Heart left ventricle (tissue), 16 donors: ENCODE measurements at regions of chr2 and their contacts with region 1.

Region 1: GRCh38 chr2:167212014-167212648 is 323.9 kb downstream of the XIRP2 start:
- DNase-seq: peak in 1 of 5 donors; percentile 29
- ATAC-seq: peak in 3 of 4 donors; percentile 66 to 70 (median 67)
- H3K4me3 ChIP-seq: no peak overlapping the region
- H3K27ac ChIP-seq: no peak overlapping the region
- H3K4me1 ChIP-seq: peaks cover 0 to 24% (median 14%) of the 10 kb centered on the region in 12 donors
- H3K27me3 ChIP-seq: no peaks in the 10 kb centered on the region
- CTCF ChIP-seq: peak; percentile 50 to 80 (median 75)
- POLR2A ChIP-seq: no peak

Region 2: DNA sequence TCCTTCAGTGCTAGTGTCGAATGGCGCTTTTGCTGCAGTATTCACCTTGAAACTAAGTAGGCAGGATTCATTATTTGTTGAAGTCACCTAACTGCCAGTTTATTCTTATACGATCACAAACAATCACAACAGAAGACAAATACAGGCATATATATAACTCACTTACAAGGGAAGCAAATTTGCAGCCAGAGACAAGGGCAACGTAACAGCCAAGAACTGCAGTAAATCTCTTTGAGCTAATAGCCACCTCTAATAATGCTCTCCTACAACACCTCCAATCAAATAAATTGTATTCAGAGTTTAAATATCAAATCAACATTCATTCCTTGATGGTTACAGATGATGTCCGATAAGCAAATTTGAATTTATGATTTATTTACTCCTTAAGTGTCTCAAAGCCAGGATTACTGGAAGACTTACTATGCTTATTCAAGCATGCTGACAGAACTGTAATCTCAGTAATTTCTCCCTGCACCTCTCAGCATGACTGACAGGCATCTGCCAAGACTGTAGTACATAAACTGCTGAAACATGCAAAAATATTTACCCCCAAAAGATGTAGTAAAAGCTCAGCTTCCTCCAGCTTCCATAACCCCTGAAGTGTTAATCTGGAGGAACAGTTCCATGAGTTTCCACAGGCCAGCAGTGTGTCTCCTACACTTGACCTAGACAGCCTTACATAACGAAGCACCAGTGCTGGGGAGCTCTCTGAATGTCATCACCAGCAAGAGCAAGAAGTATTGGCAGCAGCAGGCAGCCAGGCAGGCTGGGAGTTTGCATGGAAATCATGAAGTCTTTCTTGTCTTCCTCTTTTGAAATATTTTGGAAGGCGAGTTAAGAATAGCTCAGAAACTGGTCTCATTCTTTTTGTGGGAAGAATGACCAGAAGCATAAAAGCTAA is 1063.4 kb before region 1 on chr2:
- intact Hi-C with region 1: no loop called
- DNase-seq: peak in 4 of 5 donors; percentile 8 to 55 (median 29)
- ATAC-seq: peak; percentile 90 to 96 (median 92)
- H3K4me3 ChIP-seq: no peak overlapping the region
- H3K27ac ChIP-seq: no peak overlapping the region
- H3K4me1 ChIP-seq: peaks cover 0 to 10% (median 0%) of the 10 kb centered on the region in 12 donors
- H3K27me3 ChIP-seq: no peaks in the 10 kb centered on the region
- CTCF ChIP-seq: no peak
- POLR2A ChIP-seq: no peak

Region 3: DNA sequence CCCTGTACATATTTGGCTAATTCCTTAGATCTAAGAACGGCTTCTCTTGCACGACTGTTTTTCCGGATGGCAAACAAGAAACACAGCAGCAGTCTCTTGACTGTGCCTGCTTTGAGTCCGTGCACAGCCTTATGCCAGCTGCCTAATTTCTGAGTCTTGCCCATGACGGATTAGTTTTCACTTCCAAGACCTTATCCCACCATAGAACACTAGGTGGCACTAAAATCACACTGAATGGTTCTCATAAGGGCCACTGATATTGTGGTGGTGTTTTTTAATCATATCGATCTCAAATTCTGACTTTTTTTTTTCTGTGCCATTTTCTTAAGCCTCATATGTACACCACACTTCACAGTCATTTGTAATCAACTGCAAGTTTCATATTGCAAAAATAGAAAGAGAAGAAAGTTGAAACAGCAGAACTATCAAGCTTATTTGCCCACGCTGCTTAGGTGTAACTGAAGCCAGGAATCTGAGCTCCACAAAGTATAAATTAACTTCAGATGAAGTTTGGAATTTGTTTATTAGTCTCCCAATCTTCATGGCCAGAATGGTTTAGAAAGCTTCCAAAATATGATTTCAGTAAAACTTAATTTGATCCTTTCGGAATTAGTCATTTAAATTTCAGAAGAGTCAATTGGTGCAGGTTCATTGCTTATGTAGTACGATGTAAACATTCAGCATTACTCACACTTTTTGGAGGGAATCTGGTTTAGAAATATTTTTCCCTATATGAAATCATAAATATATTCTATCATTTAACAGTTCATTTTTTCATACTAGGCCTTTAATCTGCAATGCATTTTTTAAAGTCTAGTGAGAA is 672.6 kb before region 1 on chr2:
- intact Hi-C with region 1: loop called in 4 of 10 experiments (anchors 5 to 10 kb)
- DNase-seq: no peak
- ATAC-seq: peak; percentile 51 to 87 (median 74)
- H3K4me3 ChIP-seq: no peak overlapping the region
- H3K27ac ChIP-seq: no peak overlapping the region
- H3K4me1 ChIP-seq: peaks cover 0 to 5% (median 0%) of the 10 kb centered on the region in 12 donors
- H3K27me3 ChIP-seq: peaks cover 0 to 3% (median 0%) of the 10 kb centered on the region in 9 donors
- CTCF ChIP-seq: peak; percentile 63 to 82 (median 73)
- POLR2A ChIP-seq: no peak

Region 4: GRCh38 chr2:166900700-166901099 is 311.4 kb before region 1 on chr2:
- intact Hi-C with region 1: loop called in 2 of 10 experiments (anchors 5 kb)
- DNase-seq: no peak
- ATAC-seq: peak; percentile 32 to 78 (median 54)
- H3K4me3 ChIP-seq: no peak overlapping the region
- H3K27ac ChIP-seq: no peak overlapping the region
- H3K4me1 ChIP-seq: no peaks in the 10 kb centered on the region
- H3K27me3 ChIP-seq: no peaks in the 10 kb centered on the region
- CTCF ChIP-seq: peak in 6 of 12 donors; percentile 8 to 35 (median 18)
- POLR2A ChIP-seq: no peak

Region 5: DNA sequence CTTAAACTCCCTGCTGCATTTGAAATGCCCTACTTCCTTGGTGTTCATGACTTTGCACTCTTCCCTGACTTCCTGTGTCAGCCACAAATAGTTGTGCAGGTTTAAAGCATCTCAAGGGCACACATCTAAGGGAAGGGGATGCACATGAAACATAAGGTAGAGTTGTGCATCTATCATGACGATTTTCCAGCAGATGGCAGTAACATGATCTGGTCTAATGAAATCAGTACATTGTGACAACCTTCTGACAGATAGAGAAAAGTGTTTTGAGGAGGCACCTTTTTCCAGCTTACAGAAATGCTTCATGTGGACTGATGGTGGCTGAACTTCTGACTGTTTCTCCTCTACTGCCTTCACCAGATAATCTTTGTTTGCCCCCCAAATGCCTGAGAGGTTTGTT is 85.0 kb before region 1 on chr2:
- intact Hi-C with region 1: loop called in 6 of 10 experiments (anchors 1 to 5 kb)
- DNase-seq: no peak
- ATAC-seq: peak in 3 of 4 donors; percentile 41 to 48 (median 41)
- H3K4me3 ChIP-seq: no peak overlapping the region
- H3K27ac ChIP-seq: no peak overlapping the region
- H3K4me1 ChIP-seq: peaks cover 0 to 5% (median 0%) of the 10 kb centered on the region in 12 donors
- H3K27me3 ChIP-seq: no peaks in the 10 kb centered on the region
- CTCF ChIP-seq: peak in 5 of 12 donors; percentile 24 to 46 (median 36)
- POLR2A ChIP-seq: no peak

Region 6: DNA sequence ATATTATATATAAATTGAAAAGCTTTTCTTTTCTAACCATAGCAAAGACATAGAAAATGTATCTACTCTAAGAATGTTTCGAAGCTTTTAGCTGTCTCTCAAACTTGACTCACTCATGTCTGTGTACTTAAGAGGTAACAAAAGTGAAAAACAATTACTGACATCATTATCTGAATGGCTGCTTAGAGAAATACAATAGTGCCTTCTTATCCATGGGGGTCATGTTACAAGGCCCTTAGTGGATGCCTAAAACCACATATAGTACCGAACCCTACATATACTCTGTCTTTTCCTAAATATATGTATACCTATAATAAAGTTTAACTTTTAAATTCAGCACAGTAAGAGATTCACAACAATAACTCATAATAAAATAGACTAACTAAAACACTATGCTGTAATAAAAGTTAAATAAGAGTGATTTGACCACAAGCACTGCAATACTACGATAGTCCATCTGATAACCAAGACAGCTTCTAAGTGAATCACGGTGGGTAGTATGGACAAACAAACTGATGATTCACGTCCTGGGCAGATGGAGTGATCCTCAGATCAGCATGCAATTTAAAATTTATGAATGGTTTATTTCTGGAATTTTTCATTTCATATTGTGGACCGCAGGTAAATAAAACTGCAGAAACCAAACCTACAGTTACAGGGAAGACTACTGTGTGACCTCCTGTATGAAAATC is 77.6 kb before region 1 on chr2:
- intact Hi-C with region 1: loop called in 5 of 10 experiments (anchors 5 kb)
- DNase-seq: no peak
- ATAC-seq: no peak
- H3K4me3 ChIP-seq: no peak overlapping the region
- H3K27ac ChIP-seq: no peak overlapping the region
- H3K4me1 ChIP-seq: peaks cover 0 to 8% (median 0%) of the 10 kb centered on the region in 12 donors
- H3K27me3 ChIP-seq: no peaks in the 10 kb centered on the region
- CTCF ChIP-seq: no peak
- POLR2A ChIP-seq: no peak

Region 7: DNA sequence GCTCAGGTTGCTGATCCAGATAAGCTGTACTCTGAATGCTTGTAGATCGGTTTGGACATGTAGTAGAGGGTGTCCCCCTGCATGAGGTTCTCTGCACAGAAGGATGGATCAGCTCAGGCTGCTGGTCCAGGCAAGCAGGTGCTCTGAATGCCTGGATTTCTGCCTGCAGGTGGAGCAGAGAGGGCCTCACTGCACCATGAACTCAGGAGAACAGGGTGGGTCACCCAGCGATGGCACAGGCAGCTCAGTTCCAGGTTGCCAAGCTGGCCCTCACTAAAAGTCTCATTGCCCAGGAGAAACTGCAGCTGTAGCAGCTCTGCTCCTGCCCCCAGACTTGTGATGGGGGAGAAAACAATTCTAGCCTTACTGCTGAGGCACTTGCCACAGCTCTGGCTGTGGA is 168.0 kb after region 1 on chr2:
- intact Hi-C with region 1: no loop called
- DNase-seq: no peak
- ATAC-seq: no peak
- H3K4me3 ChIP-seq: no peak overlapping the region
- H3K27ac ChIP-seq: no peak overlapping the region
- H3K4me1 ChIP-seq: no peaks in the 10 kb centered on the region
- H3K27me3 ChIP-seq: no peaks in the 10 kb centered on the region
- CTCF ChIP-seq: no peak
- POLR2A ChIP-seq: no peak

Region 8: DNA sequence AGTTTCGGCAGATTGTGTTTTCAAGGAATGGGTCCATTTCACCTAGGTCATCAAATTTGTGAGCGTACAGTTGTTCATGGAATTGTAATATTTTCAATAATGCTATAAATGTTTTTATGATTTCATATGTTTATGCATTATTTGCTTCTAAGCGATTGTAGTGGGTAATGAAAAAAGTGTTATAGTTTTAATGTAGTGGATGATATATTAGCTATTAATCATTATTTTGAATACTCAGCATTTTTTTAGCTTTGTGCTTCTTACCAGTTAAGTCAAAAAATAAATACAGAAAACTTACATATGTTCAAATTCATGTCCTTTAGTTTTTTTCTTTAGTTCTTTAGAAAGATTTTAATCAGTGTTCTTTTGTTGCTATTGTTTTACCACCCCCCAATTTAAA is 358.2 kb after region 1 on chr2:
- intact Hi-C with region 1: no loop called
- DNase-seq: no peak
- ATAC-seq: no peak
- H3K4me3 ChIP-seq: no peak overlapping the region
- H3K27ac ChIP-seq: no peak overlapping the region
- H3K4me1 ChIP-seq: no peaks in the 10 kb centered on the region
- H3K27me3 ChIP-seq: no peaks in the 10 kb centered on the region
- CTCF ChIP-seq: no peak
- POLR2A ChIP-seq: no peak

Region 9: DNA sequence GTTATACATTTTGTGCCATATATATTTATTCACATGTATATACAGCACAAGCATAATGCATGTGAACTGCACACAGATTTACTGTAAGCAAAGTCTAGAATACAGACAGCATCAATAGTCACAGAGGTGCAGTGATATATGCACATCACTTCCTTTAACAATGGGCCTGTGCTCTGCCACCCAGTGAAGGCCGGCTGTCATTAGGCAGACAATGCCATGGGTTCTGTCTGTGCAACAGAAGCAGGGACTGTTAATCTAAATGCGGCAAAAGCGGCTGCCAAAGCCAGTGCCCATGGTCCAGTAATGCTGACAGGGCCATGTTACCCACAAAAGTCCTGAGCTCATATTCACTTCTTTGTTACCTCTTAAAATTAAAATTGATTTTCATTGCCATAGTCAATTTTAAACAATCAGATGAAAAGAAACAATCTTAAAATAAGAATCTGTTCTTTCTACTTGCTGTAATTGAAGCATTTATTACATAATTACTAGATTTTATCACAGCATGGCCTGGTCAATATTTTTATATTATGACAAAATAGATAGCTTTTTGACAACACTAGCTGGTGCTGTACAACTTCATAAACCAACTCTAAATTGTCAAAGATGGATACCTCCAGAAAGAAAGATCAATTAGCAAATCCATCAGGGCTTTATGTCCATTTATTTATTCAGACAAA is 803.3 kb after region 1 on chr2:
- intact Hi-C with region 1: no loop called
- DNase-seq: no peak
- ATAC-seq: no peak
- H3K4me3 ChIP-seq: no peak overlapping the region
- H3K27ac ChIP-seq: no peak overlapping the region
- H3K4me1 ChIP-seq: no peaks in the 10 kb centered on the region
- H3K27me3 ChIP-seq: no peaks in the 10 kb centered on the region
- CTCF ChIP-seq: no peak
- POLR2A ChIP-seq: no peak